B cell (primary cell): ENCODE measurements at regions of chr2 and their contacts with region 1.

Region 1: DNA sequence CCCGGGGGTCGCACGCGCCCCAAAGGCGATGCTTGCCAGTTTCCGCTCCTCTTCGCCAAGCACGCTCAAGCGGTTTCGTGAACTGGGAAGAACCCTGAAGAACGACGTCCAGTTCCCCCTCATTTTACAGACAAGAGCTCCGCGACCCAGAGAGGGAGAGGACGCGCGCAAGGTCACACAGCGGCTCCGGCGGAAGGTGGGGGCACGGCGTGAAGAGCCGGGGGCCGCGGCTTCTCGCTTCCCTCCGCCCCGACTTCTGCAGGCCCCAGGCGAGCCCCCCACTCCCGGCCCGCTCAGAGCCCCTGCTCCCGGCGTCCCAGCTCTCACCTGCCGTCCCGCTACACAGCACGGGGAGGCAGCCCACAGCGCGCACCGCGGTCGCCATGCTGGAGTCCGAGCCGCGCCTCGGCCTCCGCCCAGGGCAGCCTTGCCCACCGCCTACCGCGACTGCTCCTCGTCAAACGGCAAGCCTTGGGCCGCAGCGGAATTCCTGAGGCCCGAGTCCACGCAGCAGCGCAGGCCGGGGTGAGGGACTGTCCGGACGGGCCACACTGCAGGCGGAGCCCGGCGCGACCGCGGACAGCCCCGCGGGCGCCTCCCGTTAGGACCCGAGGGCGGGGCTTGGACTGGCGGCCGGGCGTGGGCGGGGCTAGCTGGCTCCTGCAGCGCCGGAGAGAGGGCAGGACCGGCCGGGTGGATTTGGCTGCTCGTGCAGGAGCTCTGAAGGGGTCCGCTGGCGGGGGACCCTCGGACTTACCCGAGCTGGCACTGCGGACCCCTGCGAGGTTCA is at the start of gene MRPS5:
- DNase-seq: peak; percentile 90
- ATAC-seq: peak; percentile 98
- H3K4me3 ChIP-seq: peak within 1 kb of the TSS; percentile 67 to 98 (median 93)
- H3K4me3 Mint-ChIP-seq: peak within 1 kb of the TSS; percentile 95
- H3K27ac ChIP-seq: peak within 1 kb of the TSS; percentile 53 to 94
- H3K27ac Mint-ChIP-seq: peak within 1 kb of the TSS; percentile 95
- H3K4me1 ChIP-seq: peaks cover 22 to 29% of the 10 kb centered on the region in 2 donors
- H3K4me1 Mint-ChIP-seq: peaks cover 42% of the 10 kb centered on the region
- H3K27me3 ChIP-seq: no peaks in the 10 kb centered on the region
- H3K27me3 Mint-ChIP-seq: no peaks in the 10 kb centered on the region
- CTCF ChIP-seq: no peak
- total RNA-seq, gene MRPS5: 46.3 and 48.9 TPM in 2 replicates

Region 2: DNA sequence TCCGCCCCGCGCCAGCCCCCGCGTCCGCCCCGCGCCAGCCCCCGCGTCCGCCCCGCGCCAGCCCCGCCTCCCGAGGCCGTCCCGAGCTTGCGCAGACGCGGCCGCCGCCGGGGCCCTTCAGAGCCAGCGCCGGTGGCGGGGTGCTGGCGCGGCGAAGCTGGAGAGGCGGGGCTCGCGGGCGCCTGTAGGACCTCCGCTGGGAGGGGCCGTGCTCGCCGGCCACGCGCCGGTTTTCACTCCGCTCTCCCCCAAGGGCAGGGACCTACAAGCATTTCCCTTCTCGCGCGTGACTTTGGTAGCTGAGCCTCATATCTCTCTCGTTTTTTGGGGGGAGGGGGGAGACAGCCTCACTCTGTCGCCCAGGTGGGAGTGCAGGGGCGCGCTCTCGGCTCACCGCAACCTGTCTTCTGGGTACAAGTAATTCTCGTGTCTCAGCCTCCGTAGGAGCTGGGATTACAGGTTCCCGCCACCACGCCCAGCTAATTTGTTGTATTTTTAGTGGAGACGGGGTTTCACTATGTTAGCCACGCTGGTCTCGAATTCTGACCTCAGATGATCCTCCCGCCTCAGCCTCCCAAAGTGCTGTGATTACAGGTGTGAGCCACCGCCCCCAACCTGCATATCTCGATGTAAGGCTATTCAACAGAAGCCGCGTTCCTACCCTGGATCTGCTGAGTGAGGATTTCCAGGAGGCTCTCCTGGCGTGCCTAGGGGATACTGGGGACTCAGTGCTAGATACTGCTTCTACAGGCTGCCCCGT is 38.3 kb after region 1 on chr2 and contains the start of gene ZNF514:
- CTCF ChIA-PET with region 1: interaction called, 16 read pairs
- POLR2A ChIA-PET with region 1: interaction called, 16 read pairs
- intact Hi-C with region 1: loop called (anchors 1 kb)
- DNase-seq: peak; percentile 85
- ATAC-seq: peak; percentile 94
- H3K4me3 ChIP-seq: peak within 1 kb of the TSS; percentile 51 to 90 (median 71)
- H3K4me3 Mint-ChIP-seq: peak within 1 kb of the TSS; percentile 93
- H3K27ac ChIP-seq: peak within 1 kb of the TSS; percentile 41 to 66
- H3K27ac Mint-ChIP-seq: peak within 1 kb of the TSS; percentile 91
- H3K4me1 ChIP-seq: peaks cover 11 to 22% of the 10 kb centered on the region in 2 donors
- H3K4me1 Mint-ChIP-seq: peaks cover 27% of the 10 kb centered on the region
- H3K27me3 ChIP-seq: no peaks in the 10 kb centered on the region
- H3K27me3 Mint-ChIP-seq: no peaks in the 10 kb centered on the region
- CTCF ChIP-seq: no peak
- total RNA-seq, gene ZNF514: 37.0 and 38.7 TPM in 2 replicates

Region 3: GRCh38 chr2:95165129-95166064 is 43.8 kb after region 1 on chr2 and contains the start of gene ZNF2:
- CTCF ChIA-PET with region 1: interaction called, 14 read pairs
- POLR2A ChIA-PET with region 1: interaction called, 16 read pairs
- intact Hi-C with region 1: loop called (anchors 1 kb)
- DNase-seq: peak; percentile 96
- ATAC-seq: peak; percentile 94
- H3K4me3 ChIP-seq: peak within 1 kb of the TSS; percentile 70 to 96 (median 94)
- H3K4me3 Mint-ChIP-seq: peak within 1 kb of the TSS; percentile 97
- H3K27ac ChIP-seq: peak within 1 kb of the TSS; percentile 80 to 91
- H3K27ac Mint-ChIP-seq: peak within 1 kb of the TSS; percentile 98
- H3K4me1 ChIP-seq: peaks cover 11 to 16% of the 10 kb centered on the region in 2 donors
- H3K4me1 Mint-ChIP-seq: peaks cover 29% of the 10 kb centered on the region
- H3K27me3 ChIP-seq: no peaks in the 10 kb centered on the region
- H3K27me3 Mint-ChIP-seq: no peaks in the 10 kb centered on the region
- CTCF ChIP-seq: no peak
- total RNA-seq, gene ZNF2: 7.2 and 7.8 TPM in 2 replicates

Region 4: DNA sequence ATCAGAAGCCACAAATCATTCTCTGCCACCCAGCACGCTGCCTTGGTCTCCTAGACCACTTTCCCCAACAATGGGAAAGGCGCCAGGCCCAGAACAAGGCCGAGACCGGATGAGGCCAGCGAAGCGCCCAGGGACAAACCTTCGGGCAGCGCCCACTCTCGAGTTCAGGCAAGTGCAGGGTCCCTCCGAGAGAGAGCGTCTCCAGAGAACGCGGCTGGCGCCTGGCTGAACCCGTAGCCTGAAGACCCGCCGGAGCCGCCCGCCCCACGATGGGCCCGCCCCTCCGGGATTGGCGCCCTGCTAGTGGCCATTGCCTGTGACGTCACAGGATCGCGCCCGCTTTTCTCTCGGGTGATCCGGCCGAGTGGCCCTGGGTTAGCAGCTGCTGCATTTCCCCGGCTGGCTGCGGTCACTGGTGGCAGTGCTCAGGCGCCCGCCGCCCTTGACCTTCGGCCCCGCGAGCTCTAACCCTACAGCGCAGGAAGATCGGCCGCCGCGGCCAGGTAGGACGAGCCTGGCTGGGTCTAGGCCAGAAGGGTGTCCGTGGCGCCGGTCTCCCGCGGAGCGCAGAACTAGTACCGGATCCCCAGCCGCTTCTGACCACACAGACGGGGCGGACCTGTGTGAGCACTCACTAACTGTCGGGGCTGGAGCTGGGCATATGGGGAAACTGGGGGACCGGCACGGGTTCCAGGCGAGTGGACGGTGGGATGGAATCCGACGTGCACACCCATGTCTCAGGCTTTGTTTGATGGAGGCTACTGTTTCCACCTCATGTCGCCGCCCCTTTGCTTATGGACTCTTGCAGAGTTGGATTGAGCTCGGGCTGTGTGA is 281.0 kb after region 1 on chr2 and contains the start of gene FAHD2A:
- CTCF ChIA-PET with region 1: no interaction called
- POLR2A ChIA-PET with region 1: no interaction called
- intact Hi-C with region 1: loop called (anchors 2 kb)
- DNase-seq: peak; percentile 91
- ATAC-seq: peak; percentile 97
- H3K4me3 ChIP-seq: peak within 1 kb of the TSS; percentile 1 to 94 (median 85)
- H3K4me3 Mint-ChIP-seq: peak within 1 kb of the TSS; percentile 98
- H3K27ac ChIP-seq: peak within 1 kb of the TSS; percentile 34 to 66
- H3K27ac Mint-ChIP-seq: peak within 1 kb of the TSS; percentile 94
- H3K4me1 ChIP-seq: peaks cover 13 to 16% of the 10 kb centered on the region in 2 donors
- H3K4me1 Mint-ChIP-seq: peaks cover 25% of the 10 kb centered on the region
- H3K27me3 ChIP-seq: no peaks in the 10 kb centered on the region
- H3K27me3 Mint-ChIP-seq: no peaks in the 10 kb centered on the region
- CTCF ChIP-seq: no peak
- total RNA-seq, gene FAHD2A: 18.3 and 24.8 TPM in 2 replicates